ENCODE measurements at regions of chr11 and their contacts with region 1.

Region 1: GRCh38 chr11:2420502-2421225 is 20.1 kb downstream of the TSSC4 start:
- DNase-seq: peak in 1 of 2 donors; percentile 72
- H3K4me3 ChIP-seq: peak overlapping the region in 1 of 3 donors; percentile 46
- H3K27ac ChIP-seq: no peak overlapping the region
- H3K4me1 ChIP-seq: peaks cover 0 to 3% of the 10 kb centered on the region in 2 donors
- H3K27me3 ChIP-seq: peaks cover 0 to 4% of the 10 kb centered on the region in 2 donors
- CTCF ChIP-seq: peak; percentile 63 to 96 (median 91)
- POLR2A ChIP-seq: no peak

Region 2: DNA sequence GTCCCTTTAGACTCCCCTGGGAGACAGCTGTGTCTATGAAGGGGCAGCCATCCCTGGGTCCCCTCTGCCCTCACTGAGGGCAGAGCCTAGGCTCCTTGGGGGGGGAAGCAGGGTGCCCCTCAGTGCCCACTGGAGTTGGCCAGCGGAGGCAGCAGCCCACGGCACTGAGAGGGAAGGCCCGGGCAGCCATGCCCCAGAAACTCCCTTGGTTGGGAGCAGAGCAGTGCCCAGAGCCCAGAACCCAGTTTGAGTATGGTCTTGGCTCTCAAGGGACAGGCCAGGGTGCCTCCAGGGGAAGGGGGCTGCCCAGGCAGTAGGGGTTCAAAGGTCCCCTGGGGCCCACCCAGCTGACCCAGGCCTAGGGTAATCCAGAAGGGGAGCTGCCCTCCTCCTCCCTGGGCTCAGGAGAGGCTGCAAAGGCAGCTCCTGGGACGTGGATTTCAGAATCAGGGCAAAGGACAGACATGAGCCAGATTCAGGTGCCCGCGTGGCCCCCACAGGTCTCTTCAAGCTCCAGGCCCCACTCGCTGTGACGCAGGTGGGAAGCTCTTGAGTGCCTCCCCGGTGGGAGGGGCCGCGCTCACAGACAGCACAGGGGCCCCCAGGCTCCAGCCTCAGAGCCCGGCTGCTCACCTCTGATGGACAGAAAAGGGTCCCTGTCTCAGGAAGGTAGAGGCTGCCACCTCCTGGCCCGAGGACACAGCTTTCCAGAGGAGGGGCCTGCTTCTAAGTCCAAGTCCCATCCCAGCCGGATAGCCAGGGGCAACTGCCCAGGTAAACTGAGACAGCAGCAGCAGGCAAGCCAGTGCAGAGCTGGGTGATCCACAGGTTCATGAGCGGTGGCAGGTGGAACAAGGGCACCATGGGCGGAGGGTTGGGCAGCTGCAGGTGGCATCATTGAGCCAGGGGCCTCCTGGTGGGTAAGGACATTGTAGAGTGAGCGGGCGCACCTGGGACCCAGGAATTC is 121.6 kb before region 1 on chr11:
- intact Hi-C with region 1: loop called (anchors 1 kb)
- DNase-seq: peak; percentile 39 to 65
- H3K4me3 ChIP-seq: no peak overlapping the region
- H3K27ac ChIP-seq: no peak overlapping the region
- H3K4me1 ChIP-seq: no peaks in the 10 kb centered on the region
- H3K27me3 ChIP-seq: no peaks in the 10 kb centered on the region
- CTCF ChIP-seq: peak in 2 of 3 donors; percentile 58 to 67
- POLR2A ChIP-seq: no peak

Region 3: DNA sequence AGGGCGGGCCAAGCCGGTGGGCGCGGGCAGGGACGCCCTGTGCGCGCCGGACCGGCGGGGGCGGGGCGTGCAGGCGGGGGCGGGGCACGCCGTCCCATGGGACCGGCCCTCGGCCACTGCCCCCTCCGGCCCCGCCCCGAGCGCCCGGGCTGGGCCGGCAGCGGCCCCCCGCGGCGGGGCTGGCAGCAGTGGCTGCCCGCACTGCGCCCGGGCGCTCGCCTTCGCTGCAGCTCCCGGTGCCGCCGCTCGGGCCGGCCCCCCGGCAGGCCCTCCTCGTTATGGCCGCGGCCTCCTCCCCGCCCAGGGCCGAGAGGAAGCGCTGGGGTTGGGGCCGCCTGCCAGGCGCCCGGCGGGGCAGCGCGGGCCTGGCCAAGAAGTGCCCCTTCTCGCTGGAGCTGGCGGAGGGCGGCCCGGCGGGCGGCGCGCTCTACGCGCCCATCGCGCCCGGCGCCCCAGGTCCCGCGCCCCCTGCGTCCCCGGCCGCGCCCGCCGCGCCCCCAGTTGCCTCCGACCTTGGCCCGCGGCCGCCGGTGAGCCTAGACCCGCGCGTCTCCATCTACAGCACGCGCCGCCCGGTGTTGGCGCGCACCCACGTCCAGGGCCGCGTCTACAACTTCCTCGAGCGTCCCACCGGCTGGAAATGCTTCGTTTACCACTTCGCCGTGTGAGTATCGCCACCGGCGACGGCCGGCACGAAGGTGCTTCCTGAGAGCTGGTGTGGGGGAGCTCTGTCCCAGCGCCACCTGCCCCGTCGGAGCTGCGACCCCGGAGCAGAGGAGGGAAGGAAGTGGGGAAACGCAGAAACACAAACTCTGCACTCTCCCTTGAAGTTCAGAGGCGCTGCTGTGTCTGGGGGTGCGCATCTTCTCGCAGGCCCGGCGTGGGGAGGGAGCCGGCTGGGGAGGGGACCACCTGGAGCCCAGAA is 24.4 kb after region 1 on chr11 and contains the start of gene KCNQ1:
- intact Hi-C with region 1: no loop called
- DNase-seq: no peak
- H3K4me3 ChIP-seq: peak within 1 kb of the TSS; percentile 37 to 73 (median 54)
- H3K27ac ChIP-seq: no peak within 1 kb of the TSS
- H3K4me1 ChIP-seq: no peaks in the 10 kb centered on the region
- H3K27me3 ChIP-seq: no peaks in the 10 kb centered on the region
- CTCF ChIP-seq: no peak
- POLR2A ChIP-seq: no peak
- total RNA-seq, gene KCNQ1: 3.6 to 6.2 (median 5.1) TPM